Vagina (tissue), 2 donors: ENCODE measurements at regions of chr15 and their contacts with region 1.

Region 1: DNA sequence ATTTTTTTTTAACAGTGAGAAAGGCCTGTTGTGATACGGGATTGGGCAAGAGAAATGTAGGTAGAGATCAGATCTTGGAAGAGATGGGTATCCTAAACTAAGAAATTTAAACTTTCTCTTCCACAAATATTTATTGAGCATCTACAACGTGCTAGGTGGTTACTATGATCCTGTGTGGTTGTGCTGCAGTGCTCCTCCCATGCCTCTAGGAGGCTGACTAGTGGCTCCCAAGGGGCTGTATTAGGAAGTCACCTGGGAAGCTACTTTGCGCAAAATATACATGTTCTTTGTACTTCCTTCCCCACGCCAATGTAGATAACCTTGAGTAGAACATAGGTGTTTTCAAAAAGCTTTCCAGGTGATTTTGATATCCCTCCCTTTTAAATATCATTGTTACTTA is 27.2 kb downstream of the USP3 start:
- DNase-seq: no peak
- H3K4me3 ChIP-seq: no peak overlapping the region
- H3K27ac ChIP-seq: no peak overlapping the region
- H3K4me1 ChIP-seq: peaks cover 31% of the 10 kb centered on the region
- H3K27me3 ChIP-seq: no peaks in the 10 kb centered on the region
- CTCF ChIP-seq: no peak
- POLR2A ChIP-seq: no peak

Region 2: DNA sequence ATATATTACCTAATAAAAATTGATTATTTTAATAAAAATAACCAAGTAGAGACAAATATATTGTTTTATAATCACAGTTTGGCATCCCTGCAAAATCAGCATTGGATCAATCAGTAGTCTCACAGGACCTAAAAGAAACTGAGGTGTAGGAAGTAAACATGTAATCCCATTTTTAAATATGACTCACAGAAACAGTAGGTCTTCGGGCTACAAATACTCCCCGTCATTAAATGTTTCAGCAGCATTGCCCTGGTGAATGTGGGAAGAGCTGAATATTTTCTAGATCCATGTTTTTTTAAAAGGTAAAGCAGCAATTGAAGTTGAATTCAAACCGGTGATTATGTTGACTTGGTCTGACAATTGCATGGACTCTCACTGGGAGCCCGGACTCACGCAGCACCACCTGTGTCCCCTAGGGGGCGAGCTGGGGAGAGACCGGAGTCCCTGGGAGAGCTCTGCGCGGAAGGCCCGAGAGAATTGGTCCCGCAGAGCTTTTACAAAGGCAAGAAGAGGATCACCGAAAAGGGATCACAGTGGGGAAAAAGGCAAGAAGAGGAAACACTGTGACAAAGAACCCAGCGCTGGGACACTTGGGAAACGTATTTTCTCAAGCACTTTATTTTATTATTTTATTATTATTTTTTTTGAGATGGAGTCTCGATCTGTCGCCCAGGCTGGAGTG is 44.4 kb before region 1 on chr15:
- intact Hi-C with region 1: loop called (anchors 1 kb)
- DNase-seq: peak in 1 of 2 donors; percentile 86
- H3K4me3 ChIP-seq: no peak overlapping the region
- H3K27ac ChIP-seq: no peak overlapping the region
- H3K4me1 ChIP-seq: peaks cover 10% of the 10 kb centered on the region
- H3K27me3 ChIP-seq: no peaks in the 10 kb centered on the region
- CTCF ChIP-seq: peak; percentile 71 to 82 (median 81)
- POLR2A ChIP-seq: no peak

Region 3: GRCh38 chr15:63582718-63583426 is 51.3 kb after region 1 on chr15:
- intact Hi-C with region 1: no loop called
- DNase-seq: no peak
- H3K4me3 ChIP-seq: no peak overlapping the region
- H3K27ac ChIP-seq: no peak overlapping the region
- H3K4me1 ChIP-seq: no peaks in the 10 kb centered on the region
- H3K27me3 ChIP-seq: no peaks in the 10 kb centered on the region
- CTCF ChIP-seq: no peak
- POLR2A ChIP-seq: no peak